ENCODE measurements at regions of chr12 and their contacts with region 1.

Region 1: DNA sequence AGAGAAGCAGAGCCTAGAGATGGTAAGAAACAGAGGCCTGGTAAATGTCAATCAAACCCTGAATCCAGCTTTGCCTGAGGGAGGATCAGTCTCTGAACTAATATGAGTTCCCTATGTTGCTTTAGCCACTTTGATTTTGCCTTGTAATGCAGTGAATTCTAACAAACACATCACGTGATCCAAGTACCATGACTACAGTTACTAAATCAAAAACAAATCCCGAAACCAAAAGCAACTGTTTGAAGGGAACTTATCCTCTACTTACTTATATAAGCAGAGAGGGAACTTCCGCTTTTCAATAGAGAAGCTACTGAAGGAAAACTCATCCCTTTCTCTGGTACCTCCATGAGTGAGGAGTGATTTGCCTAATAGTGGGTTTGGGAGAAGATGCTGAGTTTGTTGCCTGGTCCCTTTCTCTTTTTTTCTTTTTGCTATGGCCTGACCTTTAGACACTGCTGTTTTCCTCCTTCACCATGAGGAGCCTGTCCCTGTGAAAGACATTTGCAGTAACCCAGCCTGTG is 7.7 kb upstream of the PPTC7 start:
- DNase-seq: peak in 4 of 5 donors; percentile 64 to 81 (median 74)
- H3K4me3 ChIP-seq: peak overlapping the region in 1 of 2 donors; percentile 16
- H3K4me3 Mint-ChIP-seq: peak overlapping the region in 7 of 8 donors; percentile 7 to 74 (median 66)
- H3K27ac ChIP-seq: peak overlapping the region; percentile 60
- H3K27ac Mint-ChIP-seq: peak overlapping the region; percentile 95 to 98 (median 97)
- H3K4me1 ChIP-seq: peaks cover 22% of the 10 kb centered on the region
- H3K4me1 Mint-ChIP-seq: peaks cover 17 to 32% (median 27%) of the 10 kb centered on the region in 4 donors
- H3K27me3 ChIP-seq: no peaks in the 10 kb centered on the region
- H3K27me3 Mint-ChIP-seq: no peaks in the 10 kb centered on the region

Region 2: DNA sequence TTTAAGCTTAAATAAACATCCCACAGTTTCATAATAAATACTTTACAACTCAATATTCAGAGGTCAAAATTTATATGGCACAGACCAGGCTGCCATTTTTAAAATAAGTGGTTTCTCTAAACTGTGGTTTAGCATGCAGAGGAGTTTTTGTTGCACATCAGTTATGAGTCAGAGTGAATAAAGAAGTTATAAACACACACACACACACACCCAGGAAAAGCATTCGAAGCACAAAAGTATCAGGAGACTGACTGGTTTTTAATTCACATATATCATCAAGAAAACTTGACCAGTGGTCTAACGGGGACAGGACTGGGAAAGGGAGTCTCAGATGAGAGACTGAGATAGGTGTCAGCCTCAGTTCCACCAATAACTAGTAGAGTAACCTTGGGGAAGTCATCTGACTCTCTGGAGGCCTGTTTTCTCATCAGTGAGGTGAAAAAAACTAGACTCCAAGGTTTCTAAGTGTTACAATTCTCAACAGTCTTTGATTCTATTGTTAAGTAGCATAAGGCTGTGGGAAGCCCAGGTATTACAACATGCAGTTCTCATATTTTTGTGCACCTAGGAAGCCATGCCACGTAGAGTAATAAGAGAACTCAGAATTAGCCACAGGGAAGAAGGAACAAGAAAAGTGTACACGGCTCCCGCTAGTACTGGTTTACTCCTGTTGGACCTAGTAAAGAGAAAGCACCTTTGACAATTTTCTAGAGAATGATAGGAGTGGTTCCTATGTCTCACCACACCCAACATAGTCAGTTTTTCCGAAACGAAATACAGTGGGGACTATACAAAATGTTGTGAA is 12.9 kb before region 1 on chr12:
- CTCF ChIA-PET with region 1: interaction called, 8 read pairs
- POLR2A ChIA-PET with region 1: interaction called, 17 read pairs
- intact Hi-C with region 1: loop called (anchors 1 kb)
- DNase-seq: peak in 4 of 5 donors; percentile 36 to 86 (median 38)
- H3K4me3 ChIP-seq: peak overlapping the region; percentile 2 to 25
- H3K4me3 Mint-ChIP-seq: peak overlapping the region; percentile 58 to 97 (median 78)
- H3K27ac ChIP-seq: peak overlapping the region; percentile 66
- H3K27ac Mint-ChIP-seq: peak overlapping the region; percentile 69 to 96 (median 92)
- H3K4me1 ChIP-seq: peaks cover 80% of the 10 kb centered on the region
- H3K4me1 Mint-ChIP-seq: peaks cover 50 to 82% (median 68%) of the 10 kb centered on the region in 4 donors
- H3K27me3 ChIP-seq: no peaks in the 10 kb centered on the region
- H3K27me3 Mint-ChIP-seq: no peaks in the 10 kb centered on the region

Region 3: GRCh38 chr12:110822821-110823415 is 232.1 kb after region 1 on chr12:
- CTCF ChIA-PET with region 1: no interaction called
- POLR2A ChIA-PET with region 1: no interaction called
- intact Hi-C with region 1: no loop called
- DNase-seq: no peak
- H3K4me3 ChIP-seq: no peak overlapping the region
- H3K4me3 Mint-ChIP-seq: no peak overlapping the region
- H3K27ac ChIP-seq: no peak overlapping the region
- H3K27ac Mint-ChIP-seq: peak overlapping the region in 1 of 7 donors; percentile 18
- H3K4me1 ChIP-seq: peaks cover 6% of the 10 kb centered on the region
- H3K4me1 Mint-ChIP-seq: peaks cover 3 to 7% (median 7%) of the 10 kb centered on the region in 4 donors
- H3K27me3 ChIP-seq: no peaks in the 10 kb centered on the region
- H3K27me3 Mint-ChIP-seq: peaks cover 1 to 4% of the 10 kb centered on the region in 2 donors

Measured in CD4-positive, alpha-beta memory T cell (primary cell).